Endothelial cell of umbilical vein (primary cell): ENCODE measurements at regions of chr7 and their contacts with region 1.

Region 1: GRCh38 chr7:101833799-101834198 is 16.4 kb downstream of the CUX1 start:
- DNase-seq: no peak
- H3K4me3 ChIP-seq: no peak overlapping the region
- H3K27ac ChIP-seq: no peak overlapping the region
- H3K4me1 ChIP-seq: no peaks in the 10 kb centered on the region
- H3K27me3 ChIP-seq: no peaks in the 10 kb centered on the region
- CTCF ChIP-seq: no peak
- POLR2A ChIP-seq: no peak

Region 2: GRCh38 chr7:101575168-101575567 is 258.6 kb before region 1 on chr7:
- CTCF ChIA-PET with region 1: no interaction called
- POLR2A ChIA-PET with region 1: no interaction called
- dilution Hi-C with region 1: no loop called
- intact Hi-C with region 1: no loop called
- DNase-seq: no peak
- H3K4me3 ChIP-seq: no peak overlapping the region
- H3K27ac ChIP-seq: no peak overlapping the region
- H3K4me1 ChIP-seq: no peaks in the 10 kb centered on the region
- H3K27me3 ChIP-seq: peaks cover 6 to 13% of the 10 kb centered on the region in 2 experiments
- CTCF ChIP-seq: no peak
- POLR2A ChIP-seq: no peak

Region 3: GRCh38 chr7:101743241-101743994 is 90.4 kb before region 1 on chr7:
- CTCF ChIA-PET with region 1: no interaction called
- POLR2A ChIA-PET with region 1: no interaction called
- dilution Hi-C with region 1: no loop called
- intact Hi-C with region 1: no loop called
- DNase-seq: peak; percentile 59
- H3K4me3 ChIP-seq: peak overlapping the region in 2 of 3 experiments; percentile 15 to 35
- H3K27ac ChIP-seq: no peak overlapping the region
- H3K4me1 ChIP-seq: no peaks in the 10 kb centered on the region
- H3K27me3 ChIP-seq: peaks cover 2 to 5% of the 10 kb centered on the region in 2 experiments
- CTCF ChIP-seq: peak; percentile 43 to 49
- POLR2A ChIP-seq: no peak

Region 4: GRCh38 chr7:102253973-102254370 is 420.2 kb after region 1 on chr7:
- CTCF ChIA-PET with region 1: no interaction called
- POLR2A ChIA-PET with region 1: interaction called, 13 read pairs
- dilution Hi-C with region 1: no loop called
- intact Hi-C with region 1: no loop called
- DNase-seq: no peak
- H3K4me3 ChIP-seq: no peak overlapping the region
- H3K27ac ChIP-seq: no peak overlapping the region
- H3K4me1 ChIP-seq: no peaks in the 10 kb centered on the region
- H3K27me3 ChIP-seq: no peaks in the 10 kb centered on the region
- CTCF ChIP-seq: no peak
- POLR2A ChIP-seq: no peak